AG04449 (cell line): ENCODE measurements at regions of chr22 and their contacts with region 1.

Region 1: GRCh38 chr22:35023692-35024363 is 42.1 kb upstream of the ISX start:
- DNase-seq: no peak
- H3K4me3 ChIP-seq: no peak overlapping the region
- CTCF ChIP-seq: peak; percentile 92

Region 2: GRCh38 chr22:34414484-34415440 is 609.1 kb before region 1 on chr22:
- CTCF ChIA-PET with region 1: interaction called, 24 read pairs
- POLR2A ChIA-PET with region 1: no interaction called
- DNase-seq: no peak
- H3K4me3 ChIP-seq: no peak overlapping the region
- CTCF ChIP-seq: peak; percentile 34

Region 3: DNA sequence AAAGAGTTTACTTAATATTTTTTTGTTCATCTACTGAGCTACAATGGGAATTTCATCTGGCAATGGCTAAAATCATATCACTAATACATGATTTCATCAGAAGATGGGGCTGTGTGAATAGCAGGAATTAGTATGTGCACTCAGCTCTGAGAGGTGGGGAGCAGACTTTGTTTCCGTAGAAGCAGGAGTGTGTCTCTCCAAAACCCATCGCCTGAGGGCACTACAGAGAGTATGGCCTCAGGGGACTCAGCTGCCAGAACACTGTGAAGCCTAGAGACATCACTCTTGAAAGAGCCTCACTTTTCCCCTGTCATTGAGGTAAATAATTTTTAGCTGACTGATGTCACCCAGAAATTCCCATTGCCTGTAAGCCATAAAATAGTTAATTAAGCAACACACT is 219.2 kb before region 1 on chr22:
- CTCF ChIA-PET with region 1: interaction called, 10 read pairs
- POLR2A ChIA-PET with region 1: no interaction called
- DNase-seq: no peak
- H3K4me3 ChIP-seq: no peak overlapping the region
- CTCF ChIP-seq: no peak

Region 4: DNA sequence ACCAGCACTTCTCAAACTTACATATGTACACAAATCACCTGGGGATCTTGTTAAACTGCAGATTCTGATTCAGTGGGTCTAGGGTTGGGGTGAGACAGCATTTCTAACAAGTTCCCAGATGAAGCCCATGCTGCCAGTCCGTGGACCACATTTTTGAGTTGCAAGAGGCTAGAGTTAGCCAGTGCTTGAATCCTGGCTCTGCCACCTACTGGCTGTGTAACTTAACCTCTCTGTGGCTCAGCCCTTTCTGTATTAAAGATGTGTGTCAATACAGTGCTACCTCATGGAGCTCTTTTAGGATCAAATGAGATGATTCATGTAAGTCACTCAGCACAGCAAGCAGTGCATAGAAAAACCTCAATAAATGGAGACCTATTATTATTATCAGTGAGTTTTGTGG is 48.1 kb before region 1 on chr22:
- CTCF ChIA-PET with region 1: no interaction called
- POLR2A ChIA-PET with region 1: no interaction called
- DNase-seq: no peak
- H3K4me3 ChIP-seq: no peak overlapping the region
- CTCF ChIP-seq: peak; percentile 21